ENCODE measurements at regions of chr5 and their contacts with region 1.

Region 1: DNA sequence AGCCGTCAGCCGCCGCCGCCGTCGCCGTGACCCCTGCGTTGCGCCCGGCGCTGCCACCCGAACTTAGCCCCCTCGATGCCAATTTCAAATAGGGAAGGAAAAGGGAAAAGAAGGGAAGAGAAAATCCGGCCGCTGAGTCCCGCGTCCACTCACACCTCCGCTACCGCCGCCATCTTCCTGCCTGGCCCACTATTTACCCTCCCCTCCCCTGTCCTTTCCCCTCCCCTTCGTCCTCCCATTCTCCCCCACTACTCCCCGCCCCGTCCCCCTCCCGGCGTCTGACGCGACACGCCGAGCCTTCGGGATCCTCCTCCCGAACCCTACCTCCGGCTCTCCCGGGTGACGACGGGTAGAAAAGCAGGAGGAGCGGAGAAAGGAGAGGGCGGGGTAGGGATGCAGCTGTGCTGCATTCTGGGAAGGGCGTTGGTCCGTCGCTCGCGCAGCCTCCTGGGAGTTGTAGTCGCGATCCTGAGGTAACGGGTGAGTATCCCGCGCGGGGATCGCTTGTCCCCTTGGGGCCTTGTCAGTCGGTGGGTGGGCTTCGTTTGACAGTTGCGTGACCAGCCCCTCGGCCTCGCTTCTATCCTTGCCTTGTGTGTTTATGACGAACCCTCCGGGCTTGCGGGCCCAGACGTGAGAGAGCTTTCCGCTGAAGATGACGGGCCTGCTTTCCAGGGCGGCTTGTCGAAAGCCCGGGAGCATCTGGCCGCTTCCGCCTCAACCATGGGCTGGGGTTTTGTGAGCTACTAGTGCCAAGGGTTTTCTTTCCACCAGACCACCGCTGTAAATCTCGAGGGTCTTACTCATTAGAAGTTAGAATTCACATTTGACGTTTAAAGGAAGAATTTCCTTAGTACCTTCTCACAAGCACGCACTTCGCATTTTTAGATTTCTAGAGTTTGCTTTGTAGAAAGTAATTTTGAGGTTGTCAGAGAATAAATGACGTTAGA is at the starts of genes CERT1 and POLK:
- DNase-seq: peak; percentile 80 to 95
- ATAC-seq: peak; percentile 86 to 94 (median 87)
- H3K4me3 ChIP-seq: peak within 1 kb of the TSS; percentile 62
- H3K4me3 Mint-ChIP-seq: peak within 1 kb of the TSS; percentile 96
- H3K27ac ChIP-seq: peak within 1 kb of the TSS; percentile 79
- H3K27ac Mint-ChIP-seq: peak within 1 kb of the TSS; percentile 86 to 92
- H3K4me1 ChIP-seq: peaks cover 14% of the 10 kb centered on the region
- H3K4me1 Mint-ChIP-seq: peaks cover 51% of the 10 kb centered on the region in 2 donors
- H3K27me3 ChIP-seq: no peaks in the 10 kb centered on the region
- H3K27me3 Mint-ChIP-seq: no peaks in the 10 kb centered on the region
- CTCF ChIP-seq: no peak
- total RNA-seq, gene CERT1: 50.1 to 51.4 (median 50.2) TPM
- total RNA-seq, gene POLK: 16.8 to 21.5 (median 21.4) TPM

Region 2: GRCh38 chr5:73565139-73565968 is 1946.4 kb before region 1 on chr5 and contains the starts of genes ANKRA2 and UTP15:
- intact Hi-C with region 1: loop called (anchors 10 kb)
- DNase-seq: peak; percentile 100
- ATAC-seq: peak; percentile 91 to 98 (median 93)
- H3K4me3 ChIP-seq: peak within 1 kb of the TSS; percentile 71
- H3K4me3 Mint-ChIP-seq: peak within 1 kb of the TSS; percentile 99
- H3K27ac ChIP-seq: peak within 1 kb of the TSS; percentile 95
- H3K27ac Mint-ChIP-seq: peak within 1 kb of the TSS; percentile 95 to 100
- H3K4me1 ChIP-seq: peaks cover 15% of the 10 kb centered on the region
- H3K4me1 Mint-ChIP-seq: peaks cover 38 to 40% of the 10 kb centered on the region in 2 donors
- H3K27me3 ChIP-seq: no peaks in the 10 kb centered on the region
- H3K27me3 Mint-ChIP-seq: no peaks in the 10 kb centered on the region
- CTCF ChIP-seq: no peak
- total RNA-seq, gene ANKRA2: 37.4 to 44.4 (median 41.9) TPM
- total RNA-seq, gene UTP15: 33.0 to 46.5 (median 40.9) TPM

Region 3: GRCh38 chr5:75336625-75337339 is 174.9 kb before region 1 on chr5 and contains the start of gene HMGCR:
- intact Hi-C with region 1: loop called (anchors 2 kb)
- DNase-seq: peak; percentile 95 to 99
- ATAC-seq: peak; percentile 90 to 98 (median 92)
- H3K4me3 ChIP-seq: peak within 1 kb of the TSS; percentile 77
- H3K4me3 Mint-ChIP-seq: no peak within 1 kb of the TSS
- H3K27ac ChIP-seq: peak within 1 kb of the TSS; percentile 82
- H3K27ac Mint-ChIP-seq: no peak within 1 kb of the TSS
- H3K4me1 ChIP-seq: peaks cover 10% of the 10 kb centered on the region
- H3K4me1 Mint-ChIP-seq: peaks cover 19 to 24% of the 10 kb centered on the region in 2 donors
- H3K27me3 ChIP-seq: no peaks in the 10 kb centered on the region
- H3K27me3 Mint-ChIP-seq: no peaks in the 10 kb centered on the region
- CTCF ChIP-seq: no peak
- total RNA-seq, gene HMGCR: 44.2 to 89.5 (median 62.6) TPM

Region 4: DNA sequence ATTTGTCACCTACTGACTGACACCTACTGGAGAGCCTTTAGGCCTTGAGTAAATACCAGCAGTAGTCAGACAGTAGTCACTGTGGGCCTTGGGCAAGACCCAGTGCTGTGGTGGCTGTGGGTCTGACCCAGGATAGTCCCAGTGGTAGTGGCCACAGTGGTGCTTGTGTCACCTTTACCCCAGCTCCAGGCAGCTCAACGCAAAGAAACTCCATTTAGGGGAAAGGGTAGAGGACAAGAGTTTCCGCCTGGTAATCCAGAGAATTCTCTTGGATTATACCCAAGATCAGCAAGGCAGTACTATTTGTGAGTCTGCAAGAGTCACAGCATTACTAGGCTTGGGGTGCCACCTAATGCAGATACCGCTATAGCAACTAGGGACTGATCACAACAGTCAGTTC is 29.2 kb before region 1 on chr5:
- intact Hi-C with region 1: no loop called
- DNase-seq: no peak
- ATAC-seq: no peak
- H3K4me3 ChIP-seq: no peak overlapping the region
- H3K4me3 Mint-ChIP-seq: no peak overlapping the region
- H3K27ac ChIP-seq: no peak overlapping the region
- H3K27ac Mint-ChIP-seq: no peak overlapping the region
- H3K4me1 ChIP-seq: no peaks in the 10 kb centered on the region
- H3K4me1 Mint-ChIP-seq: peaks cover 47 to 57% of the 10 kb centered on the region in 2 donors
- H3K27me3 ChIP-seq: no peaks in the 10 kb centered on the region
- H3K27me3 Mint-ChIP-seq: no peaks in the 10 kb centered on the region
- CTCF ChIP-seq: no peak

Region 5: DNA sequence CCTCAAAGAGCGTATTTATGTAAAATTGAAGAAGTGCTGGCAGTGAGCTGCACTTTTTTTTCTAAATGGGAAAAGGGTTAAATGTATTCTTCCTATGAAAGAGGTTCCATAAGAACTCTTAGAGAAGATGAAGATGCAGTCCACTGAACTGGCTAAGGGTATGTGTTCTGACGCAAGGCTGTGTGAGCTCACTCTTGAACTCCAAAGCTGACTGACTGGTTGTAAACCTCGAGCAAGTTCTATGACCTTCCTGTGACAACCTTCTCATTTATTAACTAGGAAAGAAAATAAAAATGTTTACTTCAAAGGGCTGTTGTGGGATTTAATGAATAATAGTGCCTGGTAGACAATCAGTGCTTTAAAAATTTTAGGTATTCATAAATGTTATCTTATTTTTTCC is 158.9 kb after region 1 on chr5:
- intact Hi-C with region 1: loop called (anchors 10 kb)
- DNase-seq: no peak
- ATAC-seq: no peak
- H3K4me3 ChIP-seq: no peak overlapping the region
- H3K4me3 Mint-ChIP-seq: no peak overlapping the region
- H3K27ac ChIP-seq: no peak overlapping the region
- H3K27ac Mint-ChIP-seq: peak overlapping the region in 1 of 2 donors; percentile 98
- H3K4me1 ChIP-seq: peaks cover 12% of the 10 kb centered on the region
- H3K4me1 Mint-ChIP-seq: peaks cover 27 to 34% of the 10 kb centered on the region in 2 donors
- H3K27me3 ChIP-seq: no peaks in the 10 kb centered on the region
- H3K27me3 Mint-ChIP-seq: no peaks in the 10 kb centered on the region
- CTCF ChIP-seq: no peak

Region 6: GRCh38 chr5:75717082-75717922 is 205.6 kb after region 1 on chr5 and contains the start of gene POC5:
- intact Hi-C with region 1: loop called (anchors 1 kb)
- DNase-seq: peak; percentile 97 to 98
- ATAC-seq: peak; percentile 94 to 97 (median 95)
- H3K4me3 ChIP-seq: peak within 1 kb of the TSS; percentile 75
- H3K4me3 Mint-ChIP-seq: peak within 1 kb of the TSS; percentile 97
- H3K27ac ChIP-seq: peak within 1 kb of the TSS; percentile 76
- H3K27ac Mint-ChIP-seq: peak within 1 kb of the TSS; percentile 92 to 97
- H3K4me1 ChIP-seq: peaks cover 11% of the 10 kb centered on the region
- H3K4me1 Mint-ChIP-seq: peaks cover 33 to 37% of the 10 kb centered on the region in 2 donors
- H3K27me3 ChIP-seq: no peaks in the 10 kb centered on the region
- H3K27me3 Mint-ChIP-seq: peaks cover 0 to 6% of the 10 kb centered on the region in 2 donors
- CTCF ChIP-seq: no peak
- total RNA-seq, gene POC5: 12.4 to 16.6 (median 12.5) TPM